ENCODE measurements at regions of chr12 and their contacts with region 1.

Region 1: GRCh38 chr12:103930034-103930786 is at the start of gene HSP90B1:
- DNase-seq: peak; percentile 98 to 100 (median 100)
- ATAC-seq: peak; percentile 95
- H3K4me3 ChIP-seq: peak within 1 kb of the TSS; percentile 89
- H3K27ac ChIP-seq: peak within 1 kb of the TSS; percentile 92
- H3K4me1 ChIP-seq: peaks cover 7 to 18% of the 10 kb centered on the region in 2 experiments
- H3K27me3 ChIP-seq: no peaks in the 10 kb centered on the region
- CTCF ChIP-seq: no peak
- EP300 ChIP-seq: no peak
- POLR2A ChIP-seq: peak; percentile 97
- RAD21 ChIP-seq: no peak
- polyA plus RNA-seq, gene HSP90B1: 196 to 235 TPM

Region 2: DNA sequence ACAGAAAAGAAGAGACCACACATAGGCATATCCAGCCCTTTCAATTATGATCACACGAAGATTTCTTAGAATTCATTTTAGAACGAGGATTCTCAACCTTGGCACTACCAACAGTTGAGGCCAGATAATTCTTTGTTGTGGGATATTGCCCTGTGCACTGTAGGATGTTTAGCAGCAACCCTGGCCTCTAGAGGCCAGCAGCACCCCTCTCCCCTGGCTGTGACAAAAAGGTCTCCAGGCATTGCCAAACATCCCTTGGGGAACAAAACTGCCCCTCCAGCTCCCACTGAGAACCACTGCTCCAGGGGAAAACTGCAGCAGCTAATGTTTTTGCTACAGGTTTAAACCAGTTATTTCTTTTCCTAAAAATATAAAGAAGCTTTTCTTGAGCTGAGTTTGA is 96.3 kb before region 1 on chr12:
- CTCF ChIA-PET with region 1: no interaction called
- POLR2A ChIA-PET with region 1: no interaction called
- in situ Hi-C with region 1: loop called (anchors 5 kb)
- intact Hi-C with region 1: no loop called
- DNase-seq: peak in 2 of 4 experiments; percentile 24 to 38
- ATAC-seq: peak; percentile 76
- H3K4me3 ChIP-seq: peak overlapping the region; percentile 14; the same call in 1 of the 2 replicates
- H3K27ac ChIP-seq: no peak overlapping the region
- H3K4me1 ChIP-seq: peaks cover 2 to 6% of the 10 kb centered on the region in 2 experiments; a peak in 3 of 5 replicates
- H3K27me3 ChIP-seq: no peaks in the 10 kb centered on the region
- CTCF ChIP-seq: peak in 2 of 3 experiments; percentile 27 to 47; a peak in 2 of 6 replicates
- EP300 ChIP-seq: no peak
- POLR2A ChIP-seq: no peak
- RAD21 ChIP-seq: no peak; a peak in 1 of 4 replicates

Region 3: DNA sequence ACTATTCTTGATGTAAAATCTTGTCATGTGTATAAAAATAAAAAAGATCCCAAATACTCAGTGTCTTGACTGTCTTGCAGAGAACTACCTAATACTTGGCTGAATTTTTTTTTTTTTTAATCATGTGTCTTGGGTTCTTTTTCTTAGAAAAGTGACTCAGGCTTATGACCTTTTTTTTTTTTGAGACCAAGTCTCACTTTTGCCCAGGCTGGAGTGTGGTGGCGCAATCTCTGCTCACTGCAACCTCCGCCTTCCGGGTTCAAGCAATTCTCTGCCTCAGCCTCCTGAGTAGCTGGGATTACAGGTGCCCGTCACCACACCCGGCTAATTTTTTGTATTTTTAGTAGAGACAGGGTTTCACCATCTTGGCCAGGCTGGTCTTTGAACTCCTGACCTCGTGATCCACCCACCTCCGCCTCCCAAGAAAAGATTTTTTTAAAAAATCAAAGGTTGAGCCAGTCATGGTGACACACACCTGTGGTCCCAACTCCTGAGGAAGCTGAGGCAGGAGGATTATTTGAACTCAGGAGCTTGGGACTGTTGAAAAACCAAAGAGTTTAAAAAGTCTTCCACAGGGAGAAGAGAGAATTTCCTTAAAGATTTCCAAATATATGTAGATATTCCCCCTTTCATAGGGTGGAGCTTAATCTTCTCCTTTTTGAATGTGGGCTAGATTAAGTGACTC is 17.8 kb after region 1 on chr12:
- CTCF ChIA-PET with region 1: no interaction called
- POLR2A ChIA-PET with region 1: interaction called, 18 read pairs
- in situ Hi-C with region 1: no loop called
- intact Hi-C with region 1: no loop called
- DNase-seq: no peak
- ATAC-seq: peak; percentile 12
- H3K4me3 ChIP-seq: no peak overlapping the region
- H3K27ac ChIP-seq: peak overlapping the region; percentile 20; the same call in 1 of the 3 replicates
- H3K4me1 ChIP-seq: 0 out of 5 replicates have a peak, but pooled peaks cover 0 to 2% of the 10 kb centered on the region in 2 experiments
- H3K27me3 ChIP-seq: no peaks in the 10 kb centered on the region
- CTCF ChIP-seq: no peak
- EP300 ChIP-seq: no peak
- POLR2A ChIP-seq: no peak; the same call in 1 of the 2 replicates
- RAD21 ChIP-seq: no peak

Region 4: DNA sequence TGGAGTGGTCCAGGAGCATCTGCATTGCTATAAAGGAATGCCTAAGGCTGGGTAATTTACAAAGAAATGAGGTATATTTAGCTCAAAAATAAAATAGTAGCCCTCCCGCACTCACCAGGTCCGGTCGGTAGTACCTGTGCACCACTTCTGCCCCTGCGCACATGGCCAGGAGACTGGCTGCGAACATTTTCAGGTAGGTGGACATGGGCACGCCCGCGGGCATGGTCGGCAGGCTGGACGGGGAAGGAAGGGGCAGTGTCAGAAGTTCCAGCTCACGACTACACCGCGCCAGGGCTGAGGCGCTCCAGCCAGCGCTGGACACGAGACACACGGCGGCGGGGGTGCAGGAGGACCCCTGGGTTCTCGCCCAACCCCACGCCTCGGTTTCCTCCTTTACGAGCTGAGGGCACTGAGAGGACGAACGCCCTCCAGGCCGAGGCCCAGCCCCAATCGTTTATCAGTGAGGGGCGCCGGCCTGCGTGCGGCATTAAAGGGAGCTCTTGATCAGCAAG is 26.4 kb after region 1 on chr12:
- CTCF ChIA-PET with region 1: no interaction called
- POLR2A ChIA-PET with region 1: interaction called, 18 read pairs
- in situ Hi-C with region 1: no loop called
- intact Hi-C with region 1: loop called (anchors 1 kb)
- DNase-seq: no peak
- ATAC-seq: peak; percentile 59
- H3K4me3 ChIP-seq: peak overlapping the region; percentile 95
- H3K27ac ChIP-seq: peak overlapping the region; percentile 95
- H3K4me1 ChIP-seq: peaks cover 6 to 10% of the 10 kb centered on the region in 2 experiments; a peak in 4 of 5 replicates
- H3K27me3 ChIP-seq: no peaks in the 10 kb centered on the region
- CTCF ChIP-seq: no peak
- EP300 ChIP-seq: no peak
- POLR2A ChIP-seq: no peak
- RAD21 ChIP-seq: no peak

Measured in K562 (cell line).